ENCODE measurements at regions of chr1 and their contacts with region 1.

Region 1: GRCh38 chr1:6199298-6200187 is at the start of gene RPL22:
- DNase-seq: peak; percentile 99
- ATAC-seq: peak; percentile 98
- total RNA-seq, gene RPL22: 264 TPM

Region 2: DNA sequence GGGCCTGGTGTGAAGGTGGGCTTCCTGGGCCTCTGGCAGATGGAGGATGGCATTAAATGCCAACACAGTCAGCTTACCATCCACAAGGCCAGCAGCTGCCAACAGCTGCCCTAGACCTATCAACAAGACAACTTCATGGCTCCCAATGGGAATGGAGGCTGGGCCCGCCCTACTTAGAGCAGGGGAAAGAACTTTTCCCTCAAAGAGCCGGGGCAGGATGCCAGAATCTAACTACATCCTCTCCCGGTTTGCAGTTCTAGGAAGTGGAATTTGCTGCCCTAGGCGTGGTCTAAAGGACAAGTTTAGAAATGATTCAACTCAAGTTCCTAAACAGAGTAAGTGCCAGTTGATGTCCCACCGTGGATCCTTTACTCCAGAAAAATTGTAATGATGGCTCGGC is 23.1 kb after region 1 on chr1:
- intact Hi-C with region 1: no loop called
- DNase-seq: peak; percentile 81
- ATAC-seq: peak; percentile 70

Region 3: DNA sequence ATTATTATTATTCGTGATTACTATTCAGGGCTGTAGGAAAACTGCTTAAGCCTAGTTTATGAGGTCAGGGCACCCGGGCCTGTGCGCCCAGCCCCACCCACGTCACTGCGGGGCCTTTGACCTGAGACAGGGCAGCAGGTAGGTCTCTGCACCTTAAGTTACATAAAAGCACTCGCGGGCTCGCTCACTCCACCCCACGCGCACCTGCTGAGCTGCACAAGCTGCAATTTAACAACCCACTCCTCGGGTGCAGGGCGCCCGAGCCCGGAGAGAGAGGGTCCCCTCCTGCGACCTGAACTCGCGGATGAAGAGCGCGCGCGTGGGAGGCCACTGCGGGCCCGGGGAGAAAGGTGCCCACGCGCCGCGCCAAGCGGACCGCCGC is 35.7 kb after region 1 on chr1:
- intact Hi-C with region 1: loop called (anchors 5 kb)
- DNase-seq: no peak
- ATAC-seq: no peak